Activated B cell treated with CpG ODN at 0.5 μM for 24 hours (primary cell): ENCODE measurements at regions of chr14 and their contacts with region 1.

Region 1: GRCh38 chr14:61475316-61475715 is 153.9 kb downstream of the PRKCH start:
- DNase-seq: no peak
- ATAC-seq: no peak
- H3K4me3 Mint-ChIP-seq: peak overlapping the region; percentile 19
- H3K27ac Mint-ChIP-seq: peak overlapping the region; percentile 77
- H3K4me1 Mint-ChIP-seq: peaks cover 96% of the 10 kb centered on the region
- H3K27me3 Mint-ChIP-seq: no peaks in the 10 kb centered on the region
- CTCF ChIP-seq: no peak

Region 2: GRCh38 chr14:61489932-61490331 is 14.6 kb after region 1 on chr14:
- CTCF ChIA-PET with region 1: interaction called, 5 read pairs
- POLR2A ChIA-PET with region 1: interaction called, 27 read pairs
- intact Hi-C with region 1: loop called (anchors 1 kb)
- DNase-seq: no peak
- ATAC-seq: peak; percentile 67
- H3K4me3 Mint-ChIP-seq: peak overlapping the region; percentile 19
- H3K27ac Mint-ChIP-seq: peak overlapping the region; percentile 33
- H3K4me1 Mint-ChIP-seq: peaks cover 27% of the 10 kb centered on the region
- H3K27me3 Mint-ChIP-seq: no peaks in the 10 kb centered on the region
- CTCF ChIP-seq: no peak

Region 3: DNA sequence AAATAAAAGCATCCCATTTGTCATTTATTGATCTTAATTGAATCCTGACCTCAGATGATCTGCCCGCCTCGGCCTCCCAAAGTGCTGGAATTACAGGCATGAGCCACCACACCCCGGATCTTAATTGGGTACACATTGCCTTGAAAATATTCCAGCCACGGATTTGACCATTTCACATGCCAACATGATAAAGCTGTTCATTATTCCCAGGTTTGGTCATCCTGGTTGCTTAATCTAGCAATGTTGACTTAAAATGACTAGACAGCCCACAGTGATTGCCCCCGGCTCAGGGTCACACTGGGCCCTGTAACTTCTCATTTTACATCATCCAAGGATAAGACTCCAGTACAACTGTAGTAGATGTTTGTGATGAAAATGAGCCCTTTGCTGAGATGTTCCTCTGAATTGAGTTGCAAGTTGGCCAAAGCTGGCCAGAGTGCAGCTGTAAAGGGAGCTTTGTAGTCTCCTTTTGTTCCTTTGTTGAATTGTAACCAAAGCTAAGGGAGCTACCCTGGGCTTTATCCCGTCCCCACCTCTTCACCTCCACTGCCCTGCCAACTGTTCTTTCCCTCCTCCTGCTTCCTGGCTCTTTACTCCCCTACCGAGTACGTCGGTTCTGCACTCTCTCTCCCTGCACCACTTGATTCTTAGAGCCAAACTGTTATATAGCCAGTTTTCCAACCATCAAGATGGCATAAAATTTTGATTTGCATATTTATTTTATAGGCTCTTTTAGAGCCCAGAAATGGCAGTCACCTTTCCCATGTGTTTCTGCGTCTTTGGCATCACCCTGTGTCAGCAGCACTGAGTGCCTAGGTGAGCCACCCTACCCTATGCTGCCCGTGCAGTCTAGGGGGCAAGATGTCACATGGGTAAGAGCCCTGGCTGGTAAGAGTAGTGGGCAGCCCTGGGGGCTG is 78.7 kb after region 1 on chr14:
- CTCF ChIA-PET with region 1: interaction called, 20 read pairs
- POLR2A ChIA-PET with region 1: interaction called, 43 read pairs
- intact Hi-C with region 1: loop called (anchors 1 kb)
- DNase-seq: no peak
- ATAC-seq: no peak
- H3K4me3 Mint-ChIP-seq: peak overlapping the region; percentile 75
- H3K27ac Mint-ChIP-seq: peak overlapping the region; percentile 97
- H3K4me1 Mint-ChIP-seq: peaks cover 67% of the 10 kb centered on the region
- H3K27me3 Mint-ChIP-seq: no peaks in the 10 kb centered on the region
- CTCF ChIP-seq: no peak

Region 4: DNA sequence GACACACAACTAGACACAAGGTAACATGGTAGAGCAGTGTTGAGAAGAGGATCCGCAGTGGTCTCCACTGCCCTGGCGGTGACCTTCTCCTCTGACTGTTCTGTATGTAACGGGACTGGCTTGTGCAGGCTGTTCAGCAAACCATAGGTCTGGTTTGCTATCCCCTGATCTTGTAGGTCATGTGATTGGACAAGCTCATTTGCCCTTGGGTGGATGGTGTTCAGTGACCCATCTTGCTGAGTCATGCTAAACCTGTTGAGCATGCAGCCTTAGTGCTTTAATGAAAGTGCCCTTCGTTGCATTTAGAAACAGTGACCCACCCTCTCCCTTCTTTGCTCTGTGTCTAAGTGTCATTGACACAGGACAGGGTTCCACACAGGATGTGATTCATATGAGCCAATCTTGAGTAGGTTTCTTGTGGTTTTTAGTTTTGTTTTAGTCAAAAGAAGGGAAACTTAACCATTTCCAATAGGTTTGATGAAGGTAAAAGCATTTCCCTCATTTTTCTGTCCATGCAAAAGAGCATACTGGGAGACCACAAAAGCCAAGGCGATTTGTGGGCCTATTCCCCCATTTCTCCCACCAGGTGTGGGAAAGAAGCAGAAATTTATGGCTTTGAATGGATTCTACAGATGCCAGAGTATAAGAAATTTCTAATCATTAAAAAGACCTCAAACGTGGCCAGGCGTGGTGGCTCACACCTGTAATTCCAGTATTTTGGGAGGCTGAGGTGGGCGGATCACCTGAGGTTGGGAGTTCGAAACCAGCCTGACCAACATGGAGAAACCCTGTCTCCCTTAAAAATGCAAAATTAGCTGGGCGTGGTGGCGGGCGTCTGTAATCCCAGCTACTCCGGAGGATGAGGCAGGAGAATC is 187.4 kb after region 1 on chr14:
- CTCF ChIA-PET with region 1: interaction called, 13 read pairs
- POLR2A ChIA-PET with region 1: interaction called, 39 read pairs
- intact Hi-C with region 1: loop called (anchors 1 kb)
- DNase-seq: peak; percentile 26
- ATAC-seq: peak; percentile 78
- H3K4me3 Mint-ChIP-seq: peak overlapping the region; percentile 78
- H3K27ac Mint-ChIP-seq: peak overlapping the region; percentile 91
- H3K4me1 Mint-ChIP-seq: peaks cover 57% of the 10 kb centered on the region
- H3K27me3 Mint-ChIP-seq: no peaks in the 10 kb centered on the region
- CTCF ChIP-seq: no peak

Region 5: GRCh38 chr14:61730756-61731373 is 255.5 kb after region 1 on chr14:
- CTCF ChIA-PET with region 1: interaction called, 7 read pairs
- POLR2A ChIA-PET with region 1: interaction called, 5 read pairs
- intact Hi-C with region 1: loop called (anchors 1 kb)
- DNase-seq: no peak
- ATAC-seq: no peak
- H3K4me3 Mint-ChIP-seq: no peak overlapping the region
- H3K27ac Mint-ChIP-seq: peak overlapping the region; percentile 57
- H3K4me1 Mint-ChIP-seq: peaks cover 41% of the 10 kb centered on the region
- H3K27me3 Mint-ChIP-seq: no peaks in the 10 kb centered on the region
- CTCF ChIP-seq: no peak

Region 6: DNA sequence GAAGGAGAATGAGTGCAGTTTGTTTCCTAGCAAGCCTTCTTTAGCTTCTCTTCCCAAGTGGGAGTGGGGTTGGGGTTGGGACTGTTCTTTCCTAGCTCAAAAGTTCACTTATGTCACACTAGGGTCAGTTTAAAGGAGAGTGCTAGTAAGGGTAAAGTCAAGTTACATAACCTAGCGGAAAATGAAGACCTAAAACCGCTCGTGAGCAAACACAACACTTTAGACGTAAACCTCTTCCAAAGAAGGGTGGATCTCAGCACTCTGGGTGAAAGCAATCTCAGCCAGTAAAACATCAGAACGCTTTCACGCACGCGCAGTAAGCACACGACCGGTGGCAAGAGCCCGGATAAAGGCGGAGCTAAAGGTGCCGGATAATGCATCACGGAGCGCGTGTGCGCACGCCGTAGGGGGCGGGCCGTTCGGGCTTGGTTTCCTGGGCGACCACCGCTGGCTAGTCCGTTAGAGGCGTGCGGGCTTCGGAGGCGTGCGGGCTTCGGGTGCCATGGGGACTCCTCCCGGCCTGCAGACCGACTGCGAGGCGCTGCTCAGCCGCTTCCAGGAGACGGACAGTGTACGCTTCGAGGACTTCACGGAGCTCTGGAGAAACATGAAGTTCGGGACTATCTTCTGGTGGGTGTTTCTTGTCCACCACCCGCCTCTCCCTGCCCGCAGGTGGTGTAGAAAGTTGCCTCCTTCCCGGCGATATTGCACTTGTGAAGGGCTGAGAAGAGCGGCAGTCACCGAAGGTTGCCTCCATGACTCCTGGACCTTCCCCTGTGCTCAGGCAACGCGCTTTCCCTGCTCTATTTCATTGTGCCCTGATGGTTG is 286.9 kb after region 1 on chr14 and contains the start of gene SNAPC1:
- CTCF ChIA-PET with region 1: interaction called, 3 read pairs
- POLR2A ChIA-PET with region 1: interaction called, 21 read pairs
- intact Hi-C with region 1: loop called (anchors 1 kb)
- DNase-seq: peak; percentile 90
- ATAC-seq: peak; percentile 98
- H3K4me3 Mint-ChIP-seq: peak within 1 kb of the TSS; percentile 95
- H3K27ac Mint-ChIP-seq: peak within 1 kb of the TSS; percentile 95
- H3K4me1 Mint-ChIP-seq: peaks cover 31% of the 10 kb centered on the region
- H3K27me3 Mint-ChIP-seq: no peaks in the 10 kb centered on the region
- CTCF ChIP-seq: no peak
- total RNA-seq, gene SNAPC1: 5.2 TPM in 2 replicates

Region 7: GRCh38 chr14:62081012-62081612 is 605.8 kb after region 1 on chr14:
- CTCF ChIA-PET with region 1: no interaction called
- POLR2A ChIA-PET with region 1: no interaction called
- intact Hi-C with region 1: loop called (anchors 5 kb)
- DNase-seq: peak; percentile 44
- ATAC-seq: peak; percentile 69
- H3K4me3 Mint-ChIP-seq: peak overlapping the region; percentile 78
- H3K27ac Mint-ChIP-seq: peak overlapping the region; percentile 94
- H3K4me1 Mint-ChIP-seq: peaks cover 80% of the 10 kb centered on the region
- H3K27me3 Mint-ChIP-seq: no peaks in the 10 kb centered on the region
- CTCF ChIP-seq: no peak